Activated CD4-positive, alpha-beta T cell treated with anti-CD3 and anti-CD28 coated beads, Interleukin-2, amount 10 ng/mL, durations not matched to agents 7 days and 5 days (primary cell): ENCODE measurements at regions of chr5 and their contacts with region 1.

Region 1: GRCh38 chr5:170312666-170313065 is 15.1 kb upstream of the LCP2 start:
- DNase-seq: peak; percentile 43
- H3K4me3 Mint-ChIP-seq: peak overlapping the region; percentile 23
- H3K27ac Mint-ChIP-seq: peak overlapping the region; percentile 82
- H3K4me1 Mint-ChIP-seq: peaks cover 46% of the 10 kb centered on the region
- H3K27me3 Mint-ChIP-seq: no peaks in the 10 kb centered on the region

Region 2: GRCh38 chr5:170235876-170236864 is 76.5 kb before region 1 on chr5:
- CTCF ChIA-PET with region 1: no interaction called
- POLR2A ChIA-PET with region 1: no interaction called
- DNase-seq: no peak
- H3K4me3 Mint-ChIP-seq: no peak overlapping the region
- H3K27ac Mint-ChIP-seq: no peak overlapping the region
- H3K4me1 Mint-ChIP-seq: peaks cover 4% of the 10 kb centered on the region
- H3K27me3 Mint-ChIP-seq: no peaks in the 10 kb centered on the region

Region 3: GRCh38 chr5:170293273-170293672 is 19.4 kb before region 1 on chr5:
- CTCF ChIA-PET with region 1: interaction called, 16 read pairs
- POLR2A ChIA-PET with region 1: no interaction called
- DNase-seq: peak; percentile 60
- H3K4me3 Mint-ChIP-seq: peak overlapping the region; percentile 96
- H3K27ac Mint-ChIP-seq: peak overlapping the region; percentile 79
- H3K4me1 Mint-ChIP-seq: peaks cover 71% of the 10 kb centered on the region
- H3K27me3 Mint-ChIP-seq: no peaks in the 10 kb centered on the region

Region 4: GRCh38 chr5:170327168-170327567 is 14.5 kb after region 1 on chr5:
- CTCF ChIA-PET with region 1: interaction called, 11 read pairs
- POLR2A ChIA-PET with region 1: interaction called, 11 read pairs
- DNase-seq: no peak
- H3K4me3 Mint-ChIP-seq: no peak overlapping the region
- H3K27ac Mint-ChIP-seq: no peak overlapping the region
- H3K4me1 Mint-ChIP-seq: no peaks in the 10 kb centered on the region
- H3K27me3 Mint-ChIP-seq: no peaks in the 10 kb centered on the region

Region 5: GRCh38 chr5:170333161-170333910 is 20.7 kb after region 1 on chr5:
- CTCF ChIA-PET with region 1: interaction called, 11 read pairs
- POLR2A ChIA-PET with region 1: interaction called, 11 read pairs
- DNase-seq: peak; percentile 65
- H3K4me3 Mint-ChIP-seq: peak overlapping the region; percentile 66
- H3K27ac Mint-ChIP-seq: no peak overlapping the region
- H3K4me1 Mint-ChIP-seq: peaks cover 28% of the 10 kb centered on the region
- H3K27me3 Mint-ChIP-seq: no peaks in the 10 kb centered on the region